Naive thymus-derived CD4-positive, alpha-beta T cell (primary cell): ENCODE measurements at regions of chr4 and their contacts with region 1.

Region 1: DNA sequence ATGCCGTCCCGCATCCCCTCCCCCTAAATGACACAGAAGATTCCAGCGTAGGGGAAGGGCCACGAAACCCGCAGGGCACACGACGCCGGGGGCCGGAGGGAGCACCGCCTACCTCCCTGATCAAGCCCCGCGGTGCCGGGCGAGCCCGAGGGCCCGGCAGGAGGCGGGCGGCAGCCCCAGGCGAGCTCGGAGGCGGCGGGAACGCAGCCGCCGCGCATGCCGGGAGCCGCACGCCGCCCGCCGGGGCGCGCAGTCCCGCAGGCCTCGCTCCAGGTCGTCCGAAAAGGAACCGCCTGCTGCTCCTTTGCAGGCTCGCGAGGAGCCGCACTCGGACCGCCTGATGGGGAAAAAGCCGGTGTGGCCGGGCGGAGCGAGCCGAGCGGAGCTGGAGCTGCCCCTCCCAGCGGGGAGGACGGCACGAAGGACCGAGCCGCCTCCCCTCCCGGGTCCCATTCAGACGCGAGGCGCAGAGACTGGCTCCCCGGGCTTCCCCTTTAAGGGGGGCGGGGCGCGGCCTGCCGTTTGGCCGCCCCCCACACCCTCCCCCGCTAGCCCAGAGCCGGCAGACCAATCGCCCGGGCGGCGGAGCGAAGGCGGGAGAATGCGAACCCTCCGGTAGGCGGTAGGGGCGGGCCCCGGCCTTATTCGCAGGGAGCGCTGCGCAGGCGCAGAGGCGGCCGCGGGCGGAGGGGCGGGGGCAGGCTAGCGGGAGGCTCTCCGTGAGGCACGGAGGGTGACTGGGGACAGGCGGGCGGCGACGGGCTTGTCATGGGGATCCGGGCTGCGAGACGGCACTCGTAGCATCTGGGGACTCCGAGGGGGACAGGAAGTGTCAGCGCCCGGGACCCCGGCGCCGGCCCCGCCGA is 561 bp upstream of the ING2 start:
- DNase-seq: peak; percentile 98 to 100 (median 100)
- ATAC-seq: peak; percentile 89
- H3K4me3 ChIP-seq: peak overlapping the region; percentile 90
- H3K4me3 Mint-ChIP-seq: peak overlapping the region; percentile 83 to 98 (median 92)
- H3K27ac ChIP-seq: peak overlapping the region; percentile 86
- H3K27ac Mint-ChIP-seq: peak overlapping the region; percentile 89 to 99 (median 95)
- H3K4me1 ChIP-seq: peaks cover 6 to 11% of the 10 kb centered on the region in 2 donors
- H3K4me1 Mint-ChIP-seq: peaks cover 11 to 47% (median 43%) of the 10 kb centered on the region in 7 donors
- H3K27me3 ChIP-seq: no peaks in the 10 kb centered on the region
- H3K27me3 Mint-ChIP-seq: no peaks in the 10 kb centered on the region

Region 2: DNA sequence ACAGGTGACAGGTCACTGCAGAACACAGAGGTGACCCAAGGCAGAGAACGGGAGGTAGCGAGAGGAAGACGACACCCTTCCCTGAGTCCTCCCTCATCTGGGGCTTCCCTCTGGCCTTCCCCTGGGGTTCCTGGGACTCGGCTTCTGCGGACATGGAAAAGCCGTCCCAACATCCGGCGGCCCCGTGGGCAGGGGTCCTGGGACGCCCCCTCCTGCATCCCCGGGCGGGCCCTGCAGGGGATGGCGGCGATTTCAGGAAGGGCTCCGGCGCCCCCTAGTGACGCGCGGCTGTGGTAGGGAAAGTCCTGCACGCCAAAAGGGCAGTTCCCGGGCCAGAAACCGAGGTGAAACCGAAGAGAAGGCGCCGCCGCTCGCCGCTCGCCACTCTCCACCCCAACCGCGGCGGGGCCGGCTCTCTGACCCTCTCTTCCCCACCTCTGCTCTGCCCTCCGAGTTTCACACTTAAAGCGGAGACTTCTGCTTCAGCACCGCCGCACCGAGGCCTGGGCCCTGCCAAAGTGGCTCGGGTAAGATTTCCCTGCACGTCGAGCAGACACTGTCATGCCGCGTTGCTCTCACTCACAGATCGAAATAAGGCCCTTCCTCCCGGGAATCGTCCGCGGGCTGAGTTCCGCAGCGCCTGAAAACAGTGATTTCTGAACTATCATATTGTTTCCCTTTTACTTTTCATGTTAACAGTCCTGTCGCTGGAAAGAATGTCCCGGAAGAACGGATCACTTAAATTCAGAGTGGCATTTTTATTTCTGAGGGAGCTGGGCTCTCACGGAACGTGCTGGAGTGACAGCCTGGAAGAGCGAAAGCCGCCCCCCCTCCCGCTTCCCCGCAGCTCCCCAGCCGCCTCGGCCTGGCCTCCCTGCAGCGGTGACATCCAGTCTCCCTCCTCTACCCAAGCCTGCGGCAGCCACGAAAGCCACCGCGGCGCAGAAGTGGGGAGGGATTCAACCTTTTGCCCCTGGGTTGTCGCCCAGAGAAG is 697.7 kb before region 1 on chr4:
- CTCF ChIA-PET with region 1: no interaction called
- POLR2A ChIA-PET with region 1: no interaction called
- intact Hi-C with region 1: loop called in 1 of 2 experiments (anchors 10 kb)
- DNase-seq: peak in 8 of 9 donors; percentile 24 to 74 (median 45)
- ATAC-seq: peak; percentile 47
- H3K4me3 ChIP-seq: no peak overlapping the region
- H3K4me3 Mint-ChIP-seq: peak overlapping the region; percentile 64 to 93 (median 80)
- H3K27ac ChIP-seq: no peak overlapping the region
- H3K27ac Mint-ChIP-seq: peak overlapping the region in 6 of 9 donors; percentile 68 to 79 (median 72)
- H3K4me1 ChIP-seq: peaks cover 8 to 16% of the 10 kb centered on the region in 2 donors
- H3K4me1 Mint-ChIP-seq: peaks cover 0 to 20% (median 8%) of the 10 kb centered on the region in 7 donors
- H3K27me3 ChIP-seq: no peaks in the 10 kb centered on the region
- H3K27me3 Mint-ChIP-seq: peaks cover 0 to 13% (median 4%) of the 10 kb centered on the region in 5 donors

Region 3: DNA sequence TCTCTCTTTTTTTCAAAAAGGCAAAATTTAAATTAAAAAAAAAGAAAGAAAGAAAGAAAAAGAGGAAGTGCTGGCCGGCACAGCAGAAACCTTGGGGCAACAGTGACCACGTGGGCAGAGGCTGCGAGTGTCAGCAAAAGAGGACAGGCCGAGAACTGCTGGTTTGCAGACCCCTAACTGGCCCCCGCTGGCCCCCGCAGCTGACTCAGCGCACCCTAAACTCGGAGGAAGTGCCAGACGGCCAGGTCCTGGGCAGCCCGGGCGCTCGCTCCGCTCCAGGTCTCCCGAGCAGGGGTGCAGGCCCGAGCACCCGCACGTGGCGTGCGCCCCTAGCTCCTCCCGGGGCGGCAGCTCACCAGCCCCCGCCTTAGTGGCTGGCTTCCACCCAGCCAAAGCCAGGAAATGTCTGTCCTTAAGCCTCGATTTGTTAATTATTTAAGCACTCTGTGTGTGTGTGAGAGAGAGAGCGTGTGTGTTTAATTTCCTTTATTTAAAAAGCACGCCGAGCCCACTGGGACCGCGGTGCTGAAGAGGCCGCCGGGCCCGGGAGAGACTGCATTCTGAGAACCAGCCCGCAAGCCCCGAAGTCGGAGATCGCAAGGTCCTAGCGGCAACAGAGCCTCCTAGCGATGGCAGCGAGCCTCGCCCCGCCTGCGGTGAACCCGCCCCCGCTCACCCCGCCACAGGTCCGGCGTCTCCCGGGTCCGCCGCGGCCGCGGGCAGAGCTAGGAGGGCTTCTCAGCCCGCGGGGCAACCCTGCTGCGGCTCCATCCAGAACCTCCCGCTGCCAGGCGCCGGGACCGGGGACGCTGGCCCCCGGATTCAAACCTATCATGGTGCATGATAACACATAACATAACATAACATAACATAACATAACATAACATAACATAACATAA is 105.8 kb before region 1 on chr4:
- CTCF ChIA-PET with region 1: no interaction called
- POLR2A ChIA-PET with region 1: interaction called, 5 read pairs
- intact Hi-C with region 1: loop called in 1 of 2 experiments (anchors 2 kb)
- DNase-seq: peak; percentile 32 to 70 (median 57)
- ATAC-seq: peak; percentile 88
- H3K4me3 ChIP-seq: peak overlapping the region; percentile 76
- H3K4me3 Mint-ChIP-seq: peak overlapping the region; percentile 86 to 93 (median 90)
- H3K27ac ChIP-seq: peak overlapping the region; percentile 34
- H3K27ac Mint-ChIP-seq: peak overlapping the region; percentile 65 to 95 (median 82)
- H3K4me1 ChIP-seq: peaks cover 0 to 6% of the 10 kb centered on the region in 2 donors
- H3K4me1 Mint-ChIP-seq: peaks cover 17 to 34% (median 28%) of the 10 kb centered on the region in 7 donors
- H3K27me3 ChIP-seq: no peaks in the 10 kb centered on the region
- H3K27me3 Mint-ChIP-seq: peaks cover 0 to 45% (median 0%) of the 10 kb centered on the region in 5 donors

Region 4: DNA sequence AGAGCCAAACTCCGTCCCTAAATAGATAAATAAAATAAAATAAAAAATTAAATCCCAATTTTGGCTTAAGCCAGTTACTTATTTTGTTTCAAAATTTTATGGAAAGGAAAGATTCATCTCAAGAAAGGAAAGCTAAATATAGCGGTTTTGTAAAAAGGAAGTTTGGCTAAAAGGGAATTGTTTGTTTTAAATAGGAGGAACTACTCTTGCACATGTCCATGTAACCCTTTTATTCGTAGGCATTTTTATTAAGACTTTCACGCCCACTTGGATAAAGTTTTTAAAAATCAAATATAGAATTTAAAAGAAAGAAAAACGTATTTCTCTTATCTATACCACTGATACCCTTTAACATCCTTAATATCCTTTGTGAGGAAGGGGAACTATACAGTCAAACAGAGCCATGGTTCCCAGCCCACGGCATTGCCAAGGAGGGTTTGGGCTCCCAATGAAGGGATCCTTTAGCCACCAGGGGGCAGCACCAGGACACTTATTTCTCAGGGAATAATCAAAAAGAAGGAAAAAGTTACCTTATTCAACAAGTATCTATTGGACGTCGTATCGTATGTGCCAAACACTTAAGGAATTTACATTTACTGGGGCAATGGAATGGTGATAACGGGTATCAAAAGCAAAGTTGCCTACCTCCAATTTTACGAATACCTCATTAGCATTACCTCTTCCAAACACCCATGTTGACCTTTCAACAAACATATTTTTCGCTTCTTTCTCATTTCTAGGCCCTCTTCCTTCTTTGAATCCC is 32.2 kb before region 1 on chr4:
- CTCF ChIA-PET with region 1: no interaction called
- POLR2A ChIA-PET with region 1: no interaction called
- intact Hi-C with region 1: loop called (anchors 1 kb)
- DNase-seq: peak; percentile 51 to 81 (median 71)
- ATAC-seq: peak; percentile 89
- H3K4me3 ChIP-seq: no peak overlapping the region
- H3K4me3 Mint-ChIP-seq: peak overlapping the region in 1 of 10 donors; percentile 8
- H3K27ac ChIP-seq: no peak overlapping the region
- H3K27ac Mint-ChIP-seq: no peak overlapping the region
- H3K4me1 ChIP-seq: no peaks in the 10 kb centered on the region
- H3K4me1 Mint-ChIP-seq: peaks cover 0 to 9% (median 5%) of the 10 kb centered on the region in 7 donors
- H3K27me3 ChIP-seq: no peaks in the 10 kb centered on the region
- H3K27me3 Mint-ChIP-seq: peaks cover 0 to 10% (median 0%) of the 10 kb centered on the region in 5 donors

Region 5: GRCh38 chr4:183830438-183830985 is 326.2 kb after region 1 on chr4:
- CTCF ChIA-PET with region 1: no interaction called
- POLR2A ChIA-PET with region 1: no interaction called
- intact Hi-C with region 1: no loop called
- DNase-seq: no peak
- ATAC-seq: peak; percentile 59
- H3K4me3 ChIP-seq: no peak overlapping the region
- H3K4me3 Mint-ChIP-seq: no peak overlapping the region
- H3K27ac ChIP-seq: no peak overlapping the region
- H3K27ac Mint-ChIP-seq: no peak overlapping the region
- H3K4me1 ChIP-seq: peaks cover 0 to 7% of the 10 kb centered on the region in 2 donors
- H3K4me1 Mint-ChIP-seq: peaks cover 11 to 37% (median 24%) of the 10 kb centered on the region in 7 donors
- H3K27me3 ChIP-seq: no peaks in the 10 kb centered on the region
- H3K27me3 Mint-ChIP-seq: peaks cover 0 to 5% (median 0%) of the 10 kb centered on the region in 5 donors

Region 6: DNA sequence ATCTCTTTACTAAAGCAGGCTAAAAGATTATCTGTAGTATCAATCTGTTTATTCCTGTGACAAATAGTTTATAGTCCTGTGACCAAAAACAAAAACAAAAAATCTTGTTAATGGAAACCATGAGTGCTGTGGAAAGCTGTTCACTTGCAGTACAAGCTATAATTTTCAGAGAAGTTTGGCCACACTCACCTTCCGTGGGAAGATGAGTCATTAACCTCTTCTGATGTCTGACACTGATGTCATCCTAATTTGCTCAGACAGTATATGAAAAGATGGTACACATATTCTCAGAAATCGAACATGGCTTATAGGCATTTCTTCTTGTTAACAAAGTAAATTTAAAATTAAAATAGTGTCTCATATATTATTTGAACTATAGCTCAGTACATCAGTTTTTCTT is 733.3 kb after region 1 on chr4:
- CTCF ChIA-PET with region 1: no interaction called
- POLR2A ChIA-PET with region 1: no interaction called
- intact Hi-C with region 1: loop called in 1 of 2 experiments (anchors 5 kb)
- DNase-seq: peak in 1 of 9 donors; percentile 31
- ATAC-seq: peak; percentile 45
- H3K4me3 ChIP-seq: no peak overlapping the region
- H3K4me3 Mint-ChIP-seq: peak overlapping the region in 1 of 10 donors; percentile 80
- H3K27ac ChIP-seq: no peak overlapping the region
- H3K27ac Mint-ChIP-seq: peak overlapping the region in 4 of 9 donors; percentile 19 to 93 (median 27)
- H3K4me1 ChIP-seq: no peaks in the 10 kb centered on the region
- H3K4me1 Mint-ChIP-seq: peaks cover 0 to 51% (median 8%) of the 10 kb centered on the region in 7 donors
- H3K27me3 ChIP-seq: no peaks in the 10 kb centered on the region
- H3K27me3 Mint-ChIP-seq: no peaks in the 10 kb centered on the region

Region 7: DNA sequence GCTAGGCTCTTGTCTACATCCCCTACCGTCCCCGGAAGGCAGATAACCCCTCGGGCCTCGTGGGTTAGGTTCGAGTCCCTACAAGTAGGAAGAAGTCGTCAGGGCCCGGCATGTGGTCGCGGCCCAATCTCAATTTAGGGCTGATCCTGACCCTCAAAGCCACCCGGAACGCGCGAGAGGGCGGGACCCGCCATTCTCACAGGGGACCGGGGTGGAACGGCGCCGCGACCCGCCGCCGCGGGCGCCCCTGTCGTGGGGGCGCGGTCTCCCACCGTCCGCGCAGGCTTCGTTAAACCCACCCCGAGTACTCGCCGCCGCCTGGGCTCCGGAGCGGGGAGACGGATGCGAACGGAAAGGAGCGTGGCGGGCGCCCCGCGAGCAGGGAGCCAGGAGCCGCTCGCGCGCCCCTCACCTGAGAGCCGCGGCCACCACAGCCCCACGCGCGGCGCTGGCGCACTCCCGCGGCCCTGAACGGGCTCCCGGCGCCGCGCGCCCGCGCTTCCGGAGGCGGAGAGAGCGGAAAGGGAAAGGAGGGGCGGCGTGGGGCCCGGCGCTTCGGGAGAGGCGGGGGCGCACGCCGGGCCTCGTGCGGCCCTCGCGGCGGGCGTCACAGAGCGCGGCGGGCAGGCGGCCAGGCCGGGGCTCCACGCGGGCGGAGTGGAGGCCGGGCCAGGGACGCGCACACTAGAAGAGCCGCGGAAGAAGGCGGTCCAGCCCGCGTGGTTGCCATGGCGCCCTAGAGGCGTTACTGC is 1699.4 kb after region 1 on chr4 and contains the start of gene CFAP97:
- CTCF ChIA-PET with region 1: no interaction called
- POLR2A ChIA-PET with region 1: no interaction called
- intact Hi-C with region 1: loop called (anchors 2 kb)
- DNase-seq: peak; percentile 78 to 90 (median 85)
- ATAC-seq: peak; percentile 89
- H3K4me3 ChIP-seq: peak within 1 kb of the TSS; percentile 64
- H3K4me3 Mint-ChIP-seq: peak within 1 kb of the TSS; percentile 87 to 99 (median 96)
- H3K27ac ChIP-seq: peak within 1 kb of the TSS; percentile 75
- H3K27ac Mint-ChIP-seq: peak within 1 kb of the TSS; percentile 95 to 99 (median 98)
- H3K4me1 ChIP-seq: peaks cover 22% of the 10 kb centered on the region in 2 donors
- H3K4me1 Mint-ChIP-seq: peaks cover 28 to 60% (median 53%) of the 10 kb centered on the region in 7 donors
- H3K27me3 ChIP-seq: no peaks in the 10 kb centered on the region
- H3K27me3 Mint-ChIP-seq: peaks cover 0 to 3% (median 0%) of the 10 kb centered on the region in 5 donors
- total RNA-seq, gene CFAP97: 23.6 to 46.5 (median 38.0) TPM

Region 8: DNA sequence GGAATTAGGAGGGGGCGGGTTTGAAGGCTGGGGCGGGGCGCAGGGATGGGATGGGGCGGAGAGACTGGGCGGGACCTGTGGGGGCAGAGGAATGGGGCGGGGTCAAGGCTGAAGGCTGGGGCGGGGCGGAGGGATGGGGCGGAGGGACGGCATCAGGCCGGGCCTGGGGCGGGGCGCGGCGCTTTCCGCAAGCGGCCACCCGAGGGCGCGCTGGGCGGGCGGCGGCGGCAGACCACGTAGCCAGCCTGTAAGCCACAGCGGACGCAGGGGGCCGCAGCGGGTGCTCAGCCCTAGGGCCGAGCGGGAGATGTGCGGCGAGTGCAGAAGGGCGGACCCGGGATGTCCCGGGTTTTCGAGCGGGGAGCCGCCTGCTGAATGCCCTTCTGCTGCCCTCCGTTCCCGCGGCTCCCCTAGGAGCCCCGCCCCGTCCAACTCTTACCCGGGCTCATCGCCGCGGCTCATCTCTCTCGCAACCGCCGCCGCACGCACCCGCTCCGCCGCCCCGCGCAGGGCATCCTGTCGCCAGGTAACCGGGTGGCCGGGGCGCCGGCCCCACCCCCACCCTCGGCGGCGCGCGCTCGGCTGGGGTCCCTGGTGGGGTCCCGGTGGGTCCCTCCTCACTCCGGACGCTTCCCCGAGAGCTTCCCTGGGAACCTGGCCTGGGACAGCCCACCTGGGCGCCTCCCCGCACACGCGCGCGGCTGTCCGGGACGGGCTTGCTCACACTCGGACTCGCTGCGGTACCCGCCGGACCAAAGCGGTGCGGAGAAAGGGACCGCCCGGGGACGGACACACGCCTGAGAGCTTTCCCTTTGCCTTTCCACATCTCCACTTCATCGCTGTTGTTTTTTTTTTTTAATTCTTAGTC is 1967.2 kb after region 1 on chr4 and contains the start of gene CCDC110:
- CTCF ChIA-PET with region 1: no interaction called
- POLR2A ChIA-PET with region 1: no interaction called
- intact Hi-C with region 1: loop called in 1 of 2 experiments (anchors 1 kb)
- DNase-seq: peak; percentile 72 to 89 (median 86)
- ATAC-seq: peak; percentile 99
- H3K4me3 ChIP-seq: peak within 1 kb of the TSS; percentile 61
- H3K4me3 Mint-ChIP-seq: peak within 1 kb of the TSS; percentile 87 to 98 (median 92)
- H3K27ac ChIP-seq: peak within 1 kb of the TSS; percentile 65
- H3K27ac Mint-ChIP-seq: peak within 1 kb of the TSS; percentile 5 to 90 (median 86)
- H3K4me1 ChIP-seq: peaks cover 0 to 3% of the 10 kb centered on the region in 2 donors
- H3K4me1 Mint-ChIP-seq: peaks cover 5 to 18% (median 9%) of the 10 kb centered on the region in 7 donors
- H3K27me3 ChIP-seq: no peaks in the 10 kb centered on the region
- H3K27me3 Mint-ChIP-seq: peaks cover 0 to 52% (median 6%) of the 10 kb centered on the region in 5 donors
- total RNA-seq, gene CCDC110: 0.42 to 1.8 (median 0.76) TPM in 4 of 5 experiments, not detected in the other